Activated B cell treated with CpG ODN at 0.5 μM for 24 hours (primary cell): ENCODE measurements at regions of chr3 and their contacts with region 1.

Region 1: DNA sequence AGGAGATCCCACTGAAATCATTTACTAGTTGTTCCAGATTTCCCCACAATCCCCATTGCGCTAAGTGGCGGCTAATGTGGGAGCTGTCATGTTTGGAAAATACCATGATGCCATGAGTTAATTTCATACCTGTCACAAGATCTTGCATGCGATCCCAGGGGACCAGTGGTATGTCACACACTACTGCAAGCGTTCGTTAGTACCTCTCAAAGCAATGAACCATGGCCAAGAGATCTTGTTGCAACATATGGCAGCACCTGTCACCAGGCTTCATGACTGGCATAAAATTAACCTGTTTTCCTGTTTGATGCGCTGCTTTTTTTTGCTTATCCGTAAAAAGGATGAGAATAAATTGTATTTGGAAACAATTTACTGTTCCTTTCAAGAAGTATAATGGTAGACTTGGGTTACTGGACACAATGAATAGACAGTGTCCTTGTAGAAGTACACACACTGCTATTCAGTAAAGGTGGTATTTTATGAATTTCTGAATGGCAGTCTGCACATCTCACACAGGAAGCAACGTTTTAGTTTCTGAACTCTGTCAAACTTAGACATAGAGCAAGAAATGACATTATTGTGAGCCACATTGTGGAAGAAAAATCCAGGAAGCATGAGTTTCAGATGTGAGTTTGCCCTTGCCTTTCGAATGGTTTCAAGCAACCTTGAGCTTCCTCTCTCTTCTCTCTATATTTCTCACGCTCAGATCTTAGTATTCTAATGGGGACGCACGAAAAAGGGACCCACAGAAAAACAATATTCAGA is 81.9 kb downstream of the CHL1 start:
- DNase-seq: peak; percentile 37
- ATAC-seq: peak; percentile 91
- H3K4me3 Mint-ChIP-seq: peak overlapping the region; percentile 76
- H3K27ac Mint-ChIP-seq: peak overlapping the region; percentile 95
- H3K4me1 Mint-ChIP-seq: peaks cover 68% of the 10 kb centered on the region
- H3K27me3 Mint-ChIP-seq: no peaks in the 10 kb centered on the region
- CTCF ChIP-seq: no peak

Region 2: DNA sequence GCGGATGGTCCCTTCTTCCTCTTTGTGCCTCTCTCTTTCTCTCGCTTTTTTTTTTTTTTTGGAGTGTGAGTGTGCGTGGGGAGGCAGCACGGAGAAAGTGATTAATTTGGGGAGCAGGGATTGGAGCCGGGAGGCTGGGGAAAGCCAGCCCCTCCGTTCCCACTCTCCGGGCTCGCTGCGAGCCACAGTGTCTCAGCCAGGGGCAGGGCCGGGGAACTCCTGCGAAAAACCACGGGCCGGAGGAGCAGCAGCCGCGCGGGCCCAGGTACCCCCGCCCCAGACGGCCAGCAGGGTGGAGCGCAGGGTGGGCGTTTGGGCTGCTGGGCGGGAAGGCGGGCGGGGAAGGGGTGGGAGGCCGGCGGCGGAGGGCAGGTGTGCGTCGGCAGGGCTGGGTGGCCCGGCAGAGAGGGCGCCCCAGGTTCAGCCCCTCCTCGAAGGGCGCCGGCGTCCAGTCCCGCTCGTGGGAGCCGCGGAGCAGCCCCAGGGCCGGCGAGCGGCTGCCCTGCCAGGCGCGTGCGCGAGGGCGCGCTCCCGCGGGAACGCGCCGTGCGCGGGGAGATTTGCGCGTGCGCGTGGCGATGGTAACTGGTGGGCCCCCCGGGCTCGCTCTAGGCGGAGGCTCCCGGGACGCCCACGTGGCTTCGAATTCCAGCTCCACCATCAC is 80.5 kb before region 1 on chr3:
- CTCF ChIA-PET with region 1: no interaction called
- POLR2A ChIA-PET with region 1: interaction called, 6 read pairs
- intact Hi-C with region 1: loop called (anchors 1 kb)
- DNase-seq: peak; percentile 38
- ATAC-seq: peak; percentile 67
- H3K4me3 Mint-ChIP-seq: peak overlapping the region; percentile 86
- H3K27ac Mint-ChIP-seq: no peak overlapping the region
- H3K4me1 Mint-ChIP-seq: peaks cover 6% of the 10 kb centered on the region
- H3K27me3 Mint-ChIP-seq: peaks cover 14% of the 10 kb centered on the region
- CTCF ChIP-seq: no peak

Region 3: GRCh38 chr3:212432-212831 is 66.0 kb before region 1 on chr3:
- CTCF ChIA-PET with region 1: no interaction called
- POLR2A ChIA-PET with region 1: no interaction called
- intact Hi-C with region 1: loop called (anchors 1 kb)
- DNase-seq: no peak
- ATAC-seq: peak; percentile 91
- H3K4me3 Mint-ChIP-seq: peak overlapping the region; percentile 64
- H3K27ac Mint-ChIP-seq: peak overlapping the region; percentile 83
- H3K4me1 Mint-ChIP-seq: peaks cover 21% of the 10 kb centered on the region
- H3K27me3 Mint-ChIP-seq: no peaks in the 10 kb centered on the region
- CTCF ChIP-seq: no peak

Region 4: GRCh38 chr3:257826-258225 is 20.7 kb before region 1 on chr3:
- CTCF ChIA-PET with region 1: no interaction called
- POLR2A ChIA-PET with region 1: no interaction called
- intact Hi-C with region 1: loop called (anchors 2 kb)
- DNase-seq: no peak
- ATAC-seq: no peak
- H3K4me3 Mint-ChIP-seq: no peak overlapping the region
- H3K27ac Mint-ChIP-seq: no peak overlapping the region
- H3K4me1 Mint-ChIP-seq: peaks cover 6% of the 10 kb centered on the region
- H3K27me3 Mint-ChIP-seq: no peaks in the 10 kb centered on the region
- CTCF ChIP-seq: no peak

Region 5: GRCh38 chr3:294096-294495 is 15.6 kb after region 1 on chr3:
- CTCF ChIA-PET with region 1: interaction called, 6 read pairs
- POLR2A ChIA-PET with region 1: interaction called, 21 read pairs
- intact Hi-C with region 1: loop called (anchors 1 kb)
- DNase-seq: no peak
- ATAC-seq: no peak
- H3K4me3 Mint-ChIP-seq: no peak overlapping the region
- H3K27ac Mint-ChIP-seq: no peak overlapping the region
- H3K4me1 Mint-ChIP-seq: peaks cover 51% of the 10 kb centered on the region
- H3K27me3 Mint-ChIP-seq: no peaks in the 10 kb centered on the region
- CTCF ChIP-seq: no peak

Region 6: GRCh38 chr3:354432-354831 is 76.0 kb after region 1 on chr3:
- CTCF ChIA-PET with region 1: interaction called, 9 read pairs
- POLR2A ChIA-PET with region 1: interaction called, 8 read pairs
- intact Hi-C with region 1: loop called (anchors 1 kb)
- DNase-seq: no peak
- ATAC-seq: peak; percentile 49
- H3K4me3 Mint-ChIP-seq: no peak overlapping the region
- H3K27ac Mint-ChIP-seq: no peak overlapping the region
- H3K4me1 Mint-ChIP-seq: peaks cover 22% of the 10 kb centered on the region
- H3K27me3 Mint-ChIP-seq: no peaks in the 10 kb centered on the region
- CTCF ChIP-seq: peak; percentile 22